Activated naive CD4-positive, alpha-beta T cell treated with anti-CD3 and anti-CD28 coated beads for 36 hours (primary cell): ENCODE measurements at regions of chr4 and their contacts with region 1.

Region 1: DNA sequence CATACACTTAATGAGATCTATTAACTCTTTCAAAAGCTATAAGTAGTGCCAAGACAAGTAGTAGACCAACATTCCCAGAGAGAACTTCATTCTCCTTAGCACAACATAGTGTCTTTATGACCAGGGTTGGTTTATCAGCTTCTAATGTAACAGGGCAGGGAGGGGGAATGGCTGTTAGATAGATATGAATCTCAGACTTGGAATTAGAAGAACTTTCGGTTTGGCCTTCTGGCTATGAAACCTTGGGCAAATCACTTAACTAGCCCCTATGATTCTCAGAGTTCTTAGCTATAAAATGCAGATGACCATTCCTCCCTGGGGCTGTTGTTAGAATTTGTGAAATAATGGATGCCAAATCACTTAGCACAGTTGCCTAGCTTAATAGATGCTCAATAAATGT is 132.2 kb downstream of the SLC10A7 start:
- DNase-seq: no peak
- H3K4me3 Mint-ChIP-seq: no peak overlapping the region
- H3K27ac Mint-ChIP-seq: no peak overlapping the region
- H3K4me1 Mint-ChIP-seq: no peaks in the 10 kb centered on the region
- H3K27me3 Mint-ChIP-seq: no peaks in the 10 kb centered on the region

Region 2: GRCh38 chr4:146368209-146368608 is 21.4 kb before region 1 on chr4:
- CTCF ChIA-PET with region 1: no interaction called
- intact Hi-C with region 1: loop called (anchors 2 kb)
- DNase-seq: no peak
- H3K4me3 Mint-ChIP-seq: no peak overlapping the region
- H3K27ac Mint-ChIP-seq: no peak overlapping the region
- H3K4me1 Mint-ChIP-seq: peaks cover 2% of the 10 kb centered on the region
- H3K27me3 Mint-ChIP-seq: no peaks in the 10 kb centered on the region

Region 3: DNA sequence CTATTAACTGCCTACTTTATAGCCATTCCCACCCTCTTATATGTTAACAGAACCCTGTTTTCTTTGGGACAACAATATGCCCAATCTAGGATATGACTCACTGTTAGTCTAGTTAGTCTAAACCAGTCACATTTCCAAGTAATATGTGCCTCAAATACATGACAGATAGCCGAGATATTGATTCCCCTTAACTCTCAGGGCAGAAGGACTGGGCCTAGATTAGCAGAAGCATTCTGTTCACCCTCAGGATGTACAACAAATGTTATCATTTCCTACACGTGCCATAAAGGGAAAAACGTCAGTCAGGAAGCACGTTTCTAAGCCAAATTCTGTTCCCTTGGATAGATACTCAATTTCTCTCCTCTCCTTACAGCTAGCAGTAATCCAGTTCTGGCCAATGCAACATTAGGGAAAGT is 18.1 kb after region 1 on chr4:
- CTCF ChIA-PET with region 1: no interaction called
- intact Hi-C with region 1: no loop called
- DNase-seq: no peak
- H3K4me3 Mint-ChIP-seq: no peak overlapping the region
- H3K27ac Mint-ChIP-seq: no peak overlapping the region
- H3K4me1 Mint-ChIP-seq: no peaks in the 10 kb centered on the region
- H3K27me3 Mint-ChIP-seq: no peaks in the 10 kb centered on the region